Heart right ventricle (tissue), 16 donors: ENCODE measurements at regions of chr1 and their contacts with region 1.

Region 1: GRCh38 chr1:162023547-162024501 is at the start of gene OLFML2B:
- DNase-seq: peak; percentile 61 to 76
- ATAC-seq: peak; percentile 84 to 92 (median 88)
- H3K4me3 ChIP-seq: peak within 1 kb of the TSS; percentile 47 to 79 (median 64)
- H3K27ac ChIP-seq: peak within 1 kb of the TSS in 3 of 10 donors; percentile 32 to 88 (median 49)
- H3K4me1 ChIP-seq: peaks cover 6 to 81% (median 32%) of the 10 kb centered on the region in 9 donors
- H3K27me3 ChIP-seq: peaks cover 0 to 47% (median 11%) of the 10 kb centered on the region in 7 donors
- CTCF ChIP-seq: peak in 6 of 9 donors; percentile 13 to 50 (median 40)
- total RNA-seq, gene OLFML2B: 0.73 to 23.4 (median 1.5) TPM

Region 2: GRCh38 chr1:161792740-161793139 is 231.1 kb before region 1 on chr1:
- intact Hi-C with region 1: loop called in 1 of 10 experiments (anchors 5 kb)
- DNase-seq: peak in 1 of 2 donors; percentile 11
- ATAC-seq: peak in 7 of 8 donors; percentile 21 to 66 (median 45)
- H3K4me3 ChIP-seq: no peak overlapping the region
- H3K27ac ChIP-seq: no peak overlapping the region
- H3K4me1 ChIP-seq: no peaks in the 10 kb centered on the region
- H3K27me3 ChIP-seq: no peaks in the 10 kb centered on the region
- CTCF ChIP-seq: peak; percentile 16 to 75 (median 62)

Region 3: GRCh38 chr1:161864577-161864976 is 159.2 kb before region 1 on chr1:
- intact Hi-C with region 1: loop called in 2 of 10 experiments (anchors 10 kb)
- DNase-seq: peak in 1 of 2 donors; percentile 11
- ATAC-seq: peak in 3 of 8 donors; percentile 57 to 65 (median 62)
- H3K4me3 ChIP-seq: no peak overlapping the region
- H3K27ac ChIP-seq: no peak overlapping the region
- H3K4me1 ChIP-seq: peaks cover 0 to 9% (median 0%) of the 10 kb centered on the region in 9 donors
- H3K27me3 ChIP-seq: no peaks in the 10 kb centered on the region
- CTCF ChIP-seq: peak in 7 of 9 donors; percentile 23 to 60 (median 43)

Region 4: DNA sequence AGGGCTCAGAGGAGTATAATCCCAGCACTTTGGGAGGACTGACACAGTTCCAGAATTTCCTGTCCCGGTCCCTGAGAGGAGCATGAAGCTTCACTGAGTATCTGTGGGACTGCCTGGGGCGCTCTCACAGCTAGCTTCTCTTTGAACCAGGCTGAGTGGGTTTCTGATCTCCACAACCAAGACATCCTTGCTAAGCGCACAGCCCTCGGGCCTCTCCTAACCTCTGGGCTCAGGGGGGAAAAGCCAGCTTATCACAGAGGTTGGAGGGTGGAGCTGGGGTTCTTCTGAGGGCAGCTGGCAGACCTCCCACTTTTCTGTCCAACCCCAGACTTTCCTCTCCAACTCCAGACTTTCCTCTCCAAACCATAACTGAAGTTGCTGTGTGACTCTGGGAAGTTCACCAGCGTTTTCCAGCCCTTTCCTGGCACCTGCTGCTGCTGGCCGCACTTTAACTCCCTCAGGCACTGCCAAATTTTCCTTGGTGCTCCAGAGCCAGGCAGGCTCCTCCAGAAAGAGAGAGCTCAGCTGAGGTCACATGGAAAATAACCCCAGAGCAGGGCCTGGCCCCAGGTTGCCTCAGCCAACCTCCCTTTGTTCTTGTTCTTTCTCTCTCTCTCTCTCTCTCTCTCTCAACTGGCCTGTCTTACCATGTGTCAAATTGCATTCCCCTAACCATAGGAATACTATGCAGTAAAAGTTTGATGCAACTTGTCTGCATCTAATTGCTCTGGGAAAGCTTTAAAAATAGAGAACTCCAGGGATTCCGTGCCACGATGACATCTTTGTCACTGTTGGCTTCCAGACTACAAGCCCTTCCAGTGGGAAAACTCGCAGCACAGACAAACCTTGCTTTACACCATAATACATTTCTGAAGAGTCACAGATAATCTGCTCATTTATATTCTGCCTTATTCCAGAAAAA is 49.6 kb before region 1 on chr1:
- intact Hi-C with region 1: loop called in 2 of 10 experiments (anchors 5 to 10 kb)
- DNase-seq: peak; percentile 35 to 59
- ATAC-seq: peak; percentile 68 to 90 (median 82)
- H3K4me3 ChIP-seq: no peak overlapping the region
- H3K27ac ChIP-seq: peak overlapping the region in 9 of 10 donors; percentile 0 to 57 (median 40)
- H3K4me1 ChIP-seq: peaks cover 0 to 19% (median 13%) of the 10 kb centered on the region in 9 donors
- H3K27me3 ChIP-seq: no peaks in the 10 kb centered on the region
- CTCF ChIP-seq: no peak